CD4-positive, alpha-beta T cell (primary cell): ENCODE measurements at regions of chr5 and their contacts with region 1.

Region 1: GRCh38 chr5:163459922-163460766 is at the starts of genes HMMR and NUDCD2:
- DNase-seq: peak; percentile 88 to 98 (median 94)
- ATAC-seq: peak; percentile 82
- H3K4me3 ChIP-seq: peak within 1 kb of the TSS; percentile 74
- H3K4me3 Mint-ChIP-seq: peak within 1 kb of the TSS; percentile 95
- H3K27ac ChIP-seq: peak within 1 kb of the TSS; percentile 93 to 97
- H3K27ac Mint-ChIP-seq: peak within 1 kb of the TSS; percentile 99
- H3K4me1 ChIP-seq: peaks cover 23% of the 10 kb centered on the region
- H3K4me1 Mint-ChIP-seq: peaks cover 57% of the 10 kb centered on the region
- H3K27me3 ChIP-seq: no peaks in the 10 kb centered on the region
- H3K27me3 Mint-ChIP-seq: no peaks in the 10 kb centered on the region
- CTCF ChIP-seq: peak; percentile 35
- total RNA-seq, gene HMMR: 0.42 to 0.74 TPM
- total RNA-seq, gene NUDCD2: 18.0 to 18.9 TPM

Region 2: GRCh38 chr5:163387589-163388343 is 72.4 kb before region 1 on chr5:
- CTCF ChIA-PET with region 1: no interaction called
- POLR2A ChIA-PET with region 1: no interaction called
- intact Hi-C with region 1: no loop called
- DNase-seq: no peak
- ATAC-seq: no peak
- H3K4me3 ChIP-seq: no peak overlapping the region
- H3K4me3 Mint-ChIP-seq: no peak overlapping the region
- H3K27ac ChIP-seq: no peak overlapping the region
- H3K27ac Mint-ChIP-seq: no peak overlapping the region
- H3K4me1 ChIP-seq: no peaks in the 10 kb centered on the region
- H3K4me1 Mint-ChIP-seq: no peaks in the 10 kb centered on the region
- H3K27me3 ChIP-seq: peaks cover 3 to 4% of the 10 kb centered on the region in 2 experiments
- H3K27me3 Mint-ChIP-seq: peaks cover 11% of the 10 kb centered on the region
- CTCF ChIP-seq: no peak

Region 3: DNA sequence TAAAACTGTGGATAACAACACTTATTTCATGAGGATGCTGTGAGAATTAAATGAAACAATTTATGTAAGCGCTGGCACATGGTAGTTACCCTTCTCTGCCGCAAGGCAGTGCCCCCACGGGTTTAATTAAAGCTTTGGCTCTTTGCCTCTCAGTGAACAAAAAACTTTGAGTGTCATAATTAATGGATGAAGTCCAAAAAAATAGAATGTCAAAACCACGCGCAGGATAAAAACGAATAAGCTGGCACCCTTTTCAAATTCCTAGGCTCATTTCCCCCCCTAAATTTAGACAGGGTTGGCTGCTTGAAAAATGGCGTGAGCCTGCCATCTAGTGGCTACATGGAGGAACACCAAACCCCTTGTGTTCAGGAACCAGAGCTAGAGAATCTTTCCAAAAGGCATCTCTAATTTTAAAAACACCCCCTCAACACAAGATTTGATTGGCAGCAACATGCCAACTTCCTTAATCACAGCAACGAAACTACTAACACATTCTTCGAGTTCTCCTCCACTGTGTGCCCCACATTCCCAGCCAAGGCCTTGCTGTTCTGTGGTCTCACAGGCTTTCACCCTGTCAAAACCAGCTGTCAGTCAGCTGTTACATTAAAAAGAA is 51.7 kb before region 1 on chr5:
- CTCF ChIA-PET with region 1: interaction called, 11 read pairs
- POLR2A ChIA-PET with region 1: interaction called, 8 read pairs
- intact Hi-C with region 1: no loop called
- DNase-seq: peak; percentile 28 to 77 (median 48)
- ATAC-seq: peak; percentile 83
- H3K4me3 ChIP-seq: no peak overlapping the region
- H3K4me3 Mint-ChIP-seq: no peak overlapping the region
- H3K27ac ChIP-seq: no peak overlapping the region
- H3K27ac Mint-ChIP-seq: no peak overlapping the region
- H3K4me1 ChIP-seq: peaks cover 4% of the 10 kb centered on the region
- H3K4me1 Mint-ChIP-seq: no peaks in the 10 kb centered on the region
- H3K27me3 ChIP-seq: no peaks in the 10 kb centered on the region
- H3K27me3 Mint-ChIP-seq: peaks cover 28% of the 10 kb centered on the region
- CTCF ChIP-seq: peak; percentile 94

Region 4: DNA sequence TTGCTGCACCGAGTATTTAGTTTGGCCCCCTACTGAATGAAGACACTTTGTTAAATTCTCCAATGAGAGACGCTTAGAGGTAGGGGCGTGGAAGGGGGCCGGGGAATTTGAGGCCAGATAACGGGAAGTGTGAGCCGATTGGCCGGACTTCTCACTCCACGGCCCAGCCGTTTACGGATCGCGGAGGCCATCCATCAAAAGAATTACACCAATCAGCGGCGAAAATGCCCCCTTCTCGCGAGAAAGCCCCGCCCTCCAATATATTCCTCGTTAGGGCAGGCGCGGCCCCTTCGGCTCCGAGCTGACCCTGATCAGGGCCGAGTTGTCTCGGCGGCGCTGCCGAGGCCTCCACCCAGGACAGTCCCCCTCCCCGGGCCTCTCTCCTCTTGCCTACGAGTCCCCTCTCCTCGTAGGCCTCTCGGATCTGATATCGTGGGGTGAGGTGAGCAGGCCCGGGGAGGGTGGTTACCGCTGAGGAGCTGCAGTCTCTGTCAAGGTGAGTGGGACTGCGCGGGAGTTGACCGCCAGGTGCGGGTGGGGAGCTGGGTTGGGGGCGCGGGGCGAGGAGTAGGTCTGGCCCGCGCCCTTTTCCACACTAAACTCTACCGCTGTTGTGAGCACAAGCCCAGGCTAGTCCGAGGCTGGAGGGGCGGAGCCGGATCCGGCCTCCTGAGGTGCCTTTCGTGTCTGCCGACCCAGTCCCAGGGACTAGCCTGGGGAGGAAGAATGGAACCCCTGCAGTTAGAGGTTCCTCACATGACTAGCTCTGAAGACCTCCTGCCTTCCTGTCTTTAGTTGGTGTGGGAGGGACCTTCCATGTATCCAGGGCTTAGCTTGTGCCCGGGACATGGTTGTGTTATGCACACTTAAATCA is 22.6 kb before region 1 on chr5 and contains the start of gene CCNG1:
- CTCF ChIA-PET with region 1: interaction called, 17 read pairs
- POLR2A ChIA-PET with region 1: interaction called, 70 read pairs
- intact Hi-C with region 1: loop called (anchors 1 to 2 kb)
- DNase-seq: peak; percentile 72 to 95 (median 80)
- ATAC-seq: peak; percentile 90
- H3K4me3 ChIP-seq: peak within 1 kb of the TSS; percentile 75
- H3K4me3 Mint-ChIP-seq: peak within 1 kb of the TSS; percentile 98
- H3K27ac ChIP-seq: peak within 1 kb of the TSS; percentile 76 to 87
- H3K27ac Mint-ChIP-seq: peak within 1 kb of the TSS; percentile 98
- H3K4me1 ChIP-seq: peaks cover 21% of the 10 kb centered on the region
- H3K4me1 Mint-ChIP-seq: peaks cover 47% of the 10 kb centered on the region
- H3K27me3 ChIP-seq: no peaks in the 10 kb centered on the region
- H3K27me3 Mint-ChIP-seq: no peaks in the 10 kb centered on the region
- CTCF ChIP-seq: no peak
- total RNA-seq, gene CCNG1: 114 to 116 TPM

Region 5: GRCh38 chr5:163447191-163447590 is 13.0 kb before region 1 on chr5:
- CTCF ChIA-PET with region 1: interaction called, 9 read pairs
- POLR2A ChIA-PET with region 1: interaction called, 51 read pairs
- intact Hi-C with region 1: loop called in 1 of 2 experiments (anchors 2 kb)
- DNase-seq: no peak
- ATAC-seq: no peak
- H3K4me3 ChIP-seq: no peak overlapping the region
- H3K4me3 Mint-ChIP-seq: no peak overlapping the region
- H3K27ac ChIP-seq: no peak overlapping the region
- H3K27ac Mint-ChIP-seq: no peak overlapping the region
- H3K4me1 ChIP-seq: no peaks in the 10 kb centered on the region
- H3K4me1 Mint-ChIP-seq: no peaks in the 10 kb centered on the region
- H3K27me3 ChIP-seq: no peaks in the 10 kb centered on the region
- H3K27me3 Mint-ChIP-seq: no peaks in the 10 kb centered on the region
- CTCF ChIP-seq: no peak

Region 6: GRCh38 chr5:163473635-163474243 is 13.6 kb after region 1 on chr5:
- CTCF ChIA-PET with region 1: interaction called, 3 read pairs
- POLR2A ChIA-PET with region 1: interaction called, 18 read pairs
- intact Hi-C with region 1: no loop called
- DNase-seq: peak in 3 of 14 experiments; percentile 44 to 55 (median 55)
- ATAC-seq: peak; percentile 55
- H3K4me3 ChIP-seq: no peak overlapping the region
- H3K4me3 Mint-ChIP-seq: no peak overlapping the region
- H3K27ac ChIP-seq: no peak overlapping the region
- H3K27ac Mint-ChIP-seq: no peak overlapping the region
- H3K4me1 ChIP-seq: no peaks in the 10 kb centered on the region
- H3K4me1 Mint-ChIP-seq: no peaks in the 10 kb centered on the region
- H3K27me3 ChIP-seq: no peaks in the 10 kb centered on the region
- H3K27me3 Mint-ChIP-seq: no peaks in the 10 kb centered on the region
- CTCF ChIP-seq: peak; percentile 58